ENCODE measurements at regions of chr1 and their contacts with region 1.

Region 1: GRCh38 chr1:114282751-114283403 is 129.2 kb upstream of the SYT6 start:
- DNase-seq: peak; percentile 93
- H3K4me3 Mint-ChIP-seq: no peak overlapping the region
- H3K27ac Mint-ChIP-seq: no peak overlapping the region
- H3K4me1 Mint-ChIP-seq: no peaks in the 10 kb centered on the region
- H3K27me3 Mint-ChIP-seq: peaks cover 19% of the 10 kb centered on the region
- CTCF ChIP-seq: peak; percentile 74

Region 2: GRCh38 chr1:113415310-113416070 is 867.4 kb before region 1 on chr1:
- CTCF ChIA-PET with region 1: no interaction called
- POLR2A ChIA-PET with region 1: no interaction called
- intact Hi-C with region 1: no loop called
- DNase-seq: no peak
- H3K4me3 Mint-ChIP-seq: no peak overlapping the region
- H3K27ac Mint-ChIP-seq: no peak overlapping the region
- H3K4me1 Mint-ChIP-seq: peaks cover 25% of the 10 kb centered on the region
- H3K27me3 Mint-ChIP-seq: no peaks in the 10 kb centered on the region
- CTCF ChIP-seq: no peak

Region 3: GRCh38 chr1:113835642-113836307 is 447.1 kb before region 1 on chr1:
- CTCF ChIA-PET with region 1: interaction called, 13 read pairs
- POLR2A ChIA-PET with region 1: no interaction called
- intact Hi-C with region 1: loop called (anchors 10 kb)
- DNase-seq: peak; percentile 72
- H3K4me3 Mint-ChIP-seq: no peak overlapping the region
- H3K27ac Mint-ChIP-seq: no peak overlapping the region
- H3K4me1 Mint-ChIP-seq: no peaks in the 10 kb centered on the region
- H3K27me3 Mint-ChIP-seq: no peaks in the 10 kb centered on the region
- CTCF ChIP-seq: peak; percentile 50

Region 4: DNA sequence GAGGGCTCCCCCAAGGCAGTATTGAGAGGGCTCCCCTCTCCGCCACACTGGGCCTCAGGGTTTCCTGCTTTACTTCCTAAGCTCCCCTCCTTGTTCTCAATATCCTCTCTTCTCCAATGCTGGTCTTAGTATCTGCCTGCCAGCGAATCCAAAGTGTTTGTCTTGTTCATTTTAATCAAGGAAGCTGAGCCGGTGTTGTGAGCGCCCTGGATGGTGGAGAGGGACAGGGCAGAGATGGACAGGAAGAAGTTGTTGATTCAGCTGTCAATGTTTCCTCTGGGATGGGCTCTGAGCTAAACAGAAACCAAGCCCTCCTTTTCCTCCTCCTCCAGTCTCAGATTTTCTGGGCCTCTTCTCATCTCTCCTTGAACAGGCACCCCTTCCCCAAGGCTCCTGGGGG is 298.2 kb before region 1 on chr1:
- CTCF ChIA-PET with region 1: interaction called, 176 read pairs
- POLR2A ChIA-PET with region 1: interaction called, 9 read pairs
- intact Hi-C with region 1: no loop called
- DNase-seq: no peak
- H3K4me3 Mint-ChIP-seq: no peak overlapping the region
- H3K27ac Mint-ChIP-seq: no peak overlapping the region
- H3K4me1 Mint-ChIP-seq: peaks cover 23% of the 10 kb centered on the region
- H3K27me3 Mint-ChIP-seq: no peaks in the 10 kb centered on the region
- CTCF ChIP-seq: no peak

Region 5: GRCh38 chr1:113999799-114000198 is 283.1 kb before region 1 on chr1:
- CTCF ChIA-PET with region 1: interaction called, 17 read pairs
- POLR2A ChIA-PET with region 1: interaction called, 3 read pairs
- intact Hi-C with region 1: no loop called
- DNase-seq: no peak
- H3K4me3 Mint-ChIP-seq: no peak overlapping the region
- H3K27ac Mint-ChIP-seq: no peak overlapping the region
- H3K4me1 Mint-ChIP-seq: peaks cover 5% of the 10 kb centered on the region
- H3K27me3 Mint-ChIP-seq: no peaks in the 10 kb centered on the region
- CTCF ChIP-seq: no peak

Region 6: GRCh38 chr1:114093624-114094376 is 189.1 kb before region 1 on chr1:
- CTCF ChIA-PET with region 1: interaction called, 19 read pairs
- POLR2A ChIA-PET with region 1: no interaction called
- intact Hi-C with region 1: loop called (anchors 1 kb)
- DNase-seq: peak; percentile 45
- H3K4me3 Mint-ChIP-seq: no peak overlapping the region
- H3K27ac Mint-ChIP-seq: no peak overlapping the region
- H3K4me1 Mint-ChIP-seq: peaks cover 11% of the 10 kb centered on the region
- H3K27me3 Mint-ChIP-seq: peaks cover 46% of the 10 kb centered on the region
- CTCF ChIP-seq: peak; percentile 23